Activated CD8-positive, alpha-beta T cell treated with anti-CD3 and anti-CD28 coated beads, Interleukin-2, amount 10 ng/mL, durations not matched to agents 7 days and 5 days (primary cell): ENCODE measurements at regions of chr4 and their contacts with region 1.

Region 1: GRCh38 chr4:69823481-69824186 is 36.3 kb downstream of the SULT1E1 start:
- DNase-seq: peak; percentile 68
- ATAC-seq: peak; percentile 81
- H3K4me3 Mint-ChIP-seq: no peak overlapping the region
- H3K27ac Mint-ChIP-seq: no peak overlapping the region
- H3K4me1 Mint-ChIP-seq: no peaks in the 10 kb centered on the region
- H3K27me3 Mint-ChIP-seq: no peaks in the 10 kb centered on the region

Region 2: GRCh38 chr4:69668680-69669079 is 155.0 kb before region 1 on chr4:
- CTCF ChIA-PET with region 1: no interaction called
- POLR2A ChIA-PET with region 1: no interaction called
- DNase-seq: no peak
- ATAC-seq: no peak
- H3K4me3 Mint-ChIP-seq: no peak overlapping the region
- H3K27ac Mint-ChIP-seq: no peak overlapping the region
- H3K4me1 Mint-ChIP-seq: no peaks in the 10 kb centered on the region
- H3K27me3 Mint-ChIP-seq: no peaks in the 10 kb centered on the region

Region 3: DNA sequence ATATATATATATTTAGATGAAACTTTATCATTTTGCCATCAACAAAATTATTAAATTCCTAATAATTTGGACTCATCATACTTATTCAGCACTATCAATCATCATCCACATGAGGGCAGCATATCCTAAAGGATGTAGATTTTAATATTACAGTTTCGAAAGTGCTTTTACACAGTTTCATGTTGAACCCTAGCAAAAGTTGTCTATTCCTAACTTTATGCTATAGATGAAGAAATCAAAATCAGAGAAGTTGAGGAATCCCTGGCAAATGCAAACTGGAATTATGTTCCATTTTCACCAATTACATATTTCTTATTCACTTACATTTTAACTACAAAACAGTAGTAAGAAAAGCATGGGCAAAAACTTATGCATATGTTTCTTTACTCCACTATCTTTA is 134.0 kb before region 1 on chr4:
- CTCF ChIA-PET with region 1: interaction called, 12 read pairs
- POLR2A ChIA-PET with region 1: no interaction called
- DNase-seq: no peak
- ATAC-seq: no peak
- H3K4me3 Mint-ChIP-seq: no peak overlapping the region
- H3K27ac Mint-ChIP-seq: no peak overlapping the region
- H3K4me1 Mint-ChIP-seq: no peaks in the 10 kb centered on the region
- H3K27me3 Mint-ChIP-seq: peaks cover 2% of the 10 kb centered on the region

Region 4: GRCh38 chr4:69843932-69844331 is 20.3 kb after region 1 on chr4:
- CTCF ChIA-PET with region 1: no interaction called
- POLR2A ChIA-PET with region 1: no interaction called
- DNase-seq: no peak
- ATAC-seq: no peak
- H3K4me3 Mint-ChIP-seq: no peak overlapping the region
- H3K27ac Mint-ChIP-seq: no peak overlapping the region
- H3K4me1 Mint-ChIP-seq: peaks cover 8% of the 10 kb centered on the region
- H3K27me3 Mint-ChIP-seq: no peaks in the 10 kb centered on the region